Activated CD4-positive, alpha-beta T cell treated with anti-CD3 and anti-CD28 coated beads for 36 hours (primary cell): ENCODE measurements at regions of chr20 and their contacts with region 1.

Region 1: GRCh38 chr20:5806457-5807263 is 56.5 kb downstream of the SHLD1 start:
- DNase-seq: peak; percentile 17
- ATAC-seq: peak; percentile 68
- H3K4me3 Mint-ChIP-seq: no peak overlapping the region
- H3K27ac Mint-ChIP-seq: no peak overlapping the region
- H3K4me1 Mint-ChIP-seq: peaks cover 35% of the 10 kb centered on the region
- H3K27me3 Mint-ChIP-seq: no peaks in the 10 kb centered on the region

Region 2: GRCh38 chr20:5933802-5934436 is 127.3 kb after region 1 on chr20:
- CTCF ChIA-PET with region 1: no interaction called
- POLR2A ChIA-PET with region 1: no interaction called
- intact Hi-C with region 1: loop called in 1 of 2 experiments (anchors 10 kb)
- DNase-seq: peak; percentile 36
- ATAC-seq: peak; percentile 88
- H3K4me3 Mint-ChIP-seq: no peak overlapping the region
- H3K27ac Mint-ChIP-seq: no peak overlapping the region
- H3K4me1 Mint-ChIP-seq: peaks cover 8% of the 10 kb centered on the region
- H3K27me3 Mint-ChIP-seq: no peaks in the 10 kb centered on the region

Region 3: GRCh38 chr20:6074145-6074561 is 267.5 kb after region 1 on chr20:
- CTCF ChIA-PET with region 1: no interaction called
- POLR2A ChIA-PET with region 1: no interaction called
- intact Hi-C with region 1: loop called in 1 of 2 experiments (anchors 10 kb)
- DNase-seq: peak; percentile 13
- ATAC-seq: peak; percentile 74
- H3K4me3 Mint-ChIP-seq: no peak overlapping the region
- H3K27ac Mint-ChIP-seq: no peak overlapping the region
- H3K4me1 Mint-ChIP-seq: no peaks in the 10 kb centered on the region
- H3K27me3 Mint-ChIP-seq: peaks cover 2% of the 10 kb centered on the region